ENCODE measurements at regions of chr11 and their contacts with region 1.

Region 1: GRCh38 chr11:22304337-22304961 is 33.7 kb upstream of the SLC17A6 start:
- DNase-seq: peak; percentile 37
- ATAC-seq: no peak; the same call in 1 of the 2 replicates
- H3K4me3 ChIP-seq: no peak overlapping the region
- H3K27ac ChIP-seq: no peak overlapping the region
- H3K4me1 ChIP-seq: no peaks in the 10 kb centered on the region
- H3K27me3 ChIP-seq: 0 out of 2 replicates have a peak, but pooled peaks cover 3% of the 10 kb centered on the region
- CTCF ChIP-seq: peak; percentile 67

Region 2: DNA sequence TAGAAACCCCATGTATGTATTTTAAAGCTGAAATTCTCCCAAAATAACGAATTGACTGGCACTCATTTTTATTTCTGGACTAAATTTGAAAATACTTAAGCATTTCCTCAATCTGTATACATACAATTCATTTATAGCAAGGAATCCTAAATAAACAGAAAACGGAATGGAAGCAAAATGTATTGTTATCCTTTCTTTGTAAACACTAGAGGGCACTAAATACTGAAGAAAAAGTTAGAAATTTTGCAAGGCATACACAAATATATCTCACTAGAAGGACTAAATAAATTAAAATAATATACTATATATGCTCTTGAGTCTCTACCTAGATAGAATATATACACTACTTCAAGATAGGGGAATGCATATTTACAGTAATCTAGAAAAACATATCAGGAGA is 134.6 kb before region 1 on chr11:
- CTCF ChIA-PET with region 1: interaction called, 3 read pairs
- POLR2A ChIA-PET with region 1: no interaction called
- intact Hi-C with region 1: loop called (anchors 1 kb)
- DNase-seq: peak; percentile 5
- ATAC-seq: no peak
- H3K4me3 ChIP-seq: no peak overlapping the region
- H3K27ac ChIP-seq: no peak overlapping the region
- H3K4me1 ChIP-seq: no peaks in the 10 kb centered on the region
- H3K27me3 ChIP-seq: no peaks in the 10 kb centered on the region
- CTCF ChIP-seq: peak; percentile 50

Region 3: DNA sequence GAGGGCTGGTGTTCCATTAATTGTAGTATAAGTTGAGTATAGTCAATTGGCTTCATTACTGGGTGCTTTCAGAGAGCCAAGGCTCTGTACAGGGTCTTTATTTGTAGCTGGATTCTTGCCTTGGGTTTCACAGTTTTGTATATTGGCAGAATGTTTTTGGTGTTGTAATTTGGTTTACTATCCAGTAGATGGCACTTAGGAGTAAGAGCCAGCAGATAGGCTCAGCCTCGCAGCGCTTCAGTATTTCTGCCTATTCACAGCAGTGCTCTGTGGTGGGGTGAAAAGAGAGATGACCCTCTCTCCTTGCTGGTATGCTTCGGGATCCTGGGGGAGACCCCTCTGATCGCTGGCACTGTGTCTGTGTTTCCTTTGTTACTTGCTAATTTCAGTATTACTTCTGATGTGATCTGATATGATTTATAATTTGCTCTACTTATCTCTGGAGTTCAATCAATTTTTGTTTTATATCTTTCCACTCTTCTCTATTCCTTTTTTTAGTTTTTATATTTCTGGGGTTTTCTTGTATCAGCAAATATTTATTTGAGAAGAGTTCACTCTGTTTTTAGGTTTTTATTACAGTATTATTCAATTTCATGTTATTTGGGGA is 59.4 kb before region 1 on chr11:
- CTCF ChIA-PET with region 1: interaction called, 3 read pairs
- POLR2A ChIA-PET with region 1: no interaction called
- intact Hi-C with region 1: loop called (anchors 1 kb)
- DNase-seq: peak; percentile 50
- ATAC-seq: peak; percentile 67
- H3K4me3 ChIP-seq: no peak overlapping the region
- H3K27ac ChIP-seq: no peak overlapping the region
- H3K4me1 ChIP-seq: no peaks in the 10 kb centered on the region
- H3K27me3 ChIP-seq: peaks cover 10% of the 10 kb centered on the region; the same call in 1 of the 2 replicates
- CTCF ChIP-seq: peak; percentile 65

Region 4: GRCh38 chr11:22349491-22349890 is 45.0 kb after region 1 on chr11:
- CTCF ChIA-PET with region 1: no interaction called
- POLR2A ChIA-PET with region 1: no interaction called
- intact Hi-C with region 1: no loop called
- DNase-seq: no peak
- ATAC-seq: no peak
- H3K4me3 ChIP-seq: no peak overlapping the region
- H3K27ac ChIP-seq: no peak overlapping the region
- H3K4me1 ChIP-seq: no peaks in the 10 kb centered on the region
- H3K27me3 ChIP-seq: peaks cover 53% of the 10 kb centered on the region
- CTCF ChIP-seq: no peak

Measured in PC-3 (cell line).